CD4-positive, alpha-beta T cell (primary cell): ENCODE measurements at regions of chr1 and their contacts with region 1.

Region 1: DNA sequence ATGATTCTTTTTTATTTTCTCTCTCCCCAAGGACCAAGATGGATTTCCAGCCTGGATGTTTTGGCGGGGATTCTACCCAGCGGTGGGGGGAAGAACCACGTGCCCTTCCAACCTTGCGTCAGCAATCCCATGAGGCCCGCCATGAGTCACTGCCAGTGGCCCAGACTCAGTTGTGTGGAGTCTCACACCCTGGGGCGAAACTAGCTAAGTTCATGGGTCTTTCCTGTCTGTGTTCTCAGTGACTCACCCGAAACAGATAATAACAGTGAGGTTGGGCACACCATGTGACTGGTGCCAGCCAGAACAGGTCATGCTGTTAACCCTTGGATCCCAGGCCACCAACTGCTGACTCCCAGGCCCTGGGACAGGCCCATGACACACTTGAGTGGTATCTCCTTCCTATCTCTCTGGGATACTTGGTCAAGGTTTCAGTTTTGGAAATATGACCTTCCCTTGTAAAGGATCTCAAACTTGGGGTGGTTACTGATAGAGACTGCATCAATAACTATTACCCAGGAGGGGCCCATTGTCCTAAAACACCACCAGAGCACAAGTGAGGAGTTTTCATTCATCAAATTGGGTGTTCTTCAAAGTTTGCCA is 98.0 kb upstream of the DUSP10 start:
- DNase-seq: peak in 13 of 14 experiments; percentile 12 to 83 (median 41)
- ATAC-seq: peak; percentile 74
- H3K4me3 ChIP-seq: no peak overlapping the region
- H3K4me3 Mint-ChIP-seq: no peak overlapping the region
- H3K27ac ChIP-seq: no peak overlapping the region
- H3K27ac Mint-ChIP-seq: no peak overlapping the region
- H3K4me1 ChIP-seq: peaks cover 20% of the 10 kb centered on the region
- H3K4me1 Mint-ChIP-seq: peaks cover 19% of the 10 kb centered on the region
- H3K27me3 ChIP-seq: no peaks in the 10 kb centered on the region
- H3K27me3 Mint-ChIP-seq: no peaks in the 10 kb centered on the region
- CTCF ChIP-seq: no peak

Region 2: DNA sequence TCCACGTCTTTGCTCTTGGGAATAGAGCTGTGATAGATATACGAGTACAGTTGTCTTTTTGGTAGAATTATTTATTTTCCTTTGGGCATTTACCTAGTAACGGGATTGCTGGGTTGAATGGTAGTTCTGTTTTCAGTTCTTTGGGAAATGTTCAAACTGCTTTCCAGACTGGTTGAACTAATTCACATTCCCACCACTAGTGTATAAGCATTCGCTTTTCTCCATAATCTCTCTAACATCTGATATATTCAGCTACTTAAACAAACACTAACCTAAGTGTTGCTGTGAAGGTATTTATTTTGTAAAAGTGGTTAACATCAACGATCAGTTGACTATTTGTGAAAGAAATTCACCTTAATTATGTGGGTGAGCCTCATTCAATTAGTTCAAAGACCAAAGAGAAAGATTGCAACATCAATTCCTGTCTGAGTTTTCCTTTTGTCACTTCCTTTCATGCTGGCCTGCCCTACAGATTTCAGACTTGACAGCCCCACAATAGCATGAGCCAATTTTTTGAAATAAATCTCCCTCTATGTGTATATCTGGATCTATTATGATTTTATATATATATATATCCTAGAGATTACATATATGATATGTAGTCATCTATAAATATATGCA is 71.3 kb before region 1 on chr1:
- CTCF ChIA-PET with region 1: no interaction called
- POLR2A ChIA-PET with region 1: no interaction called
- intact Hi-C with region 1: no loop called
- DNase-seq: peak in 2 of 14 experiments; percentile 12 to 28
- ATAC-seq: no peak
- H3K4me3 ChIP-seq: no peak overlapping the region
- H3K4me3 Mint-ChIP-seq: no peak overlapping the region
- H3K27ac ChIP-seq: no peak overlapping the region
- H3K27ac Mint-ChIP-seq: no peak overlapping the region
- H3K4me1 ChIP-seq: no peaks in the 10 kb centered on the region
- H3K4me1 Mint-ChIP-seq: peaks cover 5% of the 10 kb centered on the region
- H3K27me3 ChIP-seq: no peaks in the 10 kb centered on the region
- H3K27me3 Mint-ChIP-seq: no peaks in the 10 kb centered on the region
- CTCF ChIP-seq: no peak

Region 3: GRCh38 chr1:221783936-221784335 is 56.0 kb before region 1 on chr1:
- CTCF ChIA-PET with region 1: no interaction called
- POLR2A ChIA-PET with region 1: no interaction called
- intact Hi-C with region 1: loop called in 1 of 2 experiments (anchors 10 kb)
- DNase-seq: peak in 4 of 14 experiments; percentile 22 to 76 (median 47)
- ATAC-seq: peak; percentile 88
- H3K4me3 ChIP-seq: peak overlapping the region; percentile 6
- H3K4me3 Mint-ChIP-seq: peak overlapping the region; percentile 44
- H3K27ac ChIP-seq: no peak overlapping the region
- H3K27ac Mint-ChIP-seq: no peak overlapping the region
- H3K4me1 ChIP-seq: peaks cover 51% of the 10 kb centered on the region
- H3K4me1 Mint-ChIP-seq: peaks cover 52% of the 10 kb centered on the region
- H3K27me3 ChIP-seq: no peaks in the 10 kb centered on the region
- H3K27me3 Mint-ChIP-seq: no peaks in the 10 kb centered on the region
- CTCF ChIP-seq: no peak